Activated CD4-positive, alpha-beta memory T cell treated with anti-CD3 and anti-CD28 coated beads for 36 hours (primary cell): ENCODE measurements at regions of chr12 and their contacts with region 1.

Region 1: GRCh38 chr12:106302401-106303201 is at the start of gene TCP11L2:
- DNase-seq: peak; percentile 91
- H3K4me3 Mint-ChIP-seq: peak within 1 kb of the TSS; percentile 89
- H3K27ac Mint-ChIP-seq: peak within 1 kb of the TSS; percentile 99
- H3K4me1 Mint-ChIP-seq: peaks cover 52% of the 10 kb centered on the region
- H3K27me3 Mint-ChIP-seq: no peaks in the 10 kb centered on the region
- total RNA-seq, gene TCP11L2: 8.8 to 10.3 TPM

Region 2: DNA sequence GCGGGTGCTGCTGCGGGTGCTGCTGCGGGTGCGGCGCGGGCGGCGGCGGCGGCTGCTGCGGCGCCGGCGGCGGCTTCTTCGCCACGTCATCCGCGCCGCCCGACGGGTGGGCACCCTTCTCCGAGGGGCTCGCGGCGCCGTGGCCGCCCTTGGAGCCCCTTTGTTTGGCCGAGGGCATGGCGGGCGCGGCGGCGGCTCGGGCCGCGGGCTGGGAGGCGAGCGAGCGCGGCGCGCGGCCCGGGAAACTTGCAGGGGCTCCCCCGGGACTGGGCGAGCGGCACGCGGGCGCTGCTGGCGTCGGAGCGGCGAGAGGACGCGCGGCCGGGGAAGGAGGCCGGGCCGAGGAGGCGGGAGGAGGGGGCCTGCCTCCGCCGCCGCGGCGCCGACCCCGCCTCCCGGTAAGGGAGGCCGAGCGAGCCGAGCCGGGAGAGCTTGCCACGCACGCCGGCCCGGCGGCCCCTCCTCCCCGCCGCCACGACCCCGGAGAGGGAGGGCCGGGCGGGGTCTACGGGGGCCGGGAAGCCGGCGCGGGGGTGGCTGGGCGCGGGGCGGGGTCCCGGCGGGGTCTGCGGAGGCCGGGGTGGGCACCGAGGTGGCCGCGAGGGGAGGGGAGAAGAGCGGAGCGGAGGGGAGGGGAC is 54.8 kb before region 1 on chr12 and contains the start of gene CKAP4:
- CTCF ChIA-PET with region 1: interaction called, 4 read pairs
- POLR2A ChIA-PET with region 1: no interaction called
- intact Hi-C with region 1: loop called (anchors 1 kb)
- DNase-seq: peak; percentile 61
- H3K4me3 Mint-ChIP-seq: peak within 1 kb of the TSS; percentile 76
- H3K27ac Mint-ChIP-seq: peak within 1 kb of the TSS; percentile 69
- H3K4me1 Mint-ChIP-seq: peaks cover 24% of the 10 kb centered on the region
- H3K27me3 Mint-ChIP-seq: no peaks in the 10 kb centered on the region
- total RNA-seq, gene CKAP4: 18.5 to 19.0 TPM

Region 3: GRCh38 chr12:106389151-106389550 is 86.5 kb after region 1 on chr12:
- CTCF ChIA-PET with region 1: no interaction called
- POLR2A ChIA-PET with region 1: no interaction called
- intact Hi-C with region 1: no loop called
- DNase-seq: no peak
- H3K4me3 Mint-ChIP-seq: no peak overlapping the region
- H3K27ac Mint-ChIP-seq: no peak overlapping the region
- H3K4me1 Mint-ChIP-seq: no peaks in the 10 kb centered on the region
- H3K27me3 Mint-ChIP-seq: no peaks in the 10 kb centered on the region